ENCODE measurements at regions of chr2 and their contacts with region 1.

Region 1: DNA sequence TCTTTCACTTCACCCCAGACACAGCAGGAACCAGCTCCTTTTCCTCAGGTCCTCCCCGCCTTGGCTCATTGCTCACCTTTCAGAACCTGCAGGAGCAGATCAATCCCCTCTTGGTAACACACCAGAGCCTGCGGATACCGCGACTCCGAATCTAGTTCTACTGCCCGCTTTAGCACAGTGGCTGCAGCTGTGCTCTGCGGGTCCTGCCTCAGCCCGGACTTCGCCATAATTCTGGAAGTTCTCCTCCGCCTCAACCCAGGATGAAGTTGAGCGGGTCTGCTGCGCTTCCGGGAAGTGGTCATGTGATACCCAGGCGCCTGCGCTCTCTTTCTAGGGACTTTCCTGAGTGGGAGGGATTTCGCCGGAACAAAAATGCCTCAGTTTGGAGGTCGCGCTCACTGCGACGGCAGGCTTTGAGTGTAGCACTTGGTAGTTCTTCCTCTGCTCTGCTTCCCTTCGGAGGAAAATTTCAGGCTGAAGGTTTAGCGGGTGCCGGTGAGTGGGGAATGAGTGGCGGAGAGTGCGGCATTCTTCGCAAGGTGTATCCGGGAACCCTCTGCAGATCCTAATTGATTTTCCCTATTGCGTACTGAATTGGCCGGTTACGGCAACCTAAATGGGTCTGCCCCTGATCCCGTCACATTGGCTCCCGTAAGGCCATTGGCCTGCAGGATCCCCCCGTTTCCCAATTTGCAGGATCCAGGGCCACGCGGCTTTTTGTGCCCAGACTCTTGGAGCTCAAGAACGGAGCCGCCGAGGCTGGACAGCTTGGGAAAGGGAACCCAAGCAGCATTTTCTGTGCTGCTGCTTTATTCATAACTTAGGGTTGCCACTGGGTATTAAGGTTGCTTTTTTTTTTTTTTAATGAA is at the starts of genes MITD1 and MRPL30:
- DNase-seq: peak; percentile 93
- H3K4me3 Mint-ChIP-seq: peak within 1 kb of the TSS; percentile 97
- H3K27ac Mint-ChIP-seq: peak within 1 kb of the TSS; percentile 88
- H3K4me1 Mint-ChIP-seq: peaks cover 46% of the 10 kb centered on the region
- H3K27me3 Mint-ChIP-seq: no peaks in the 10 kb centered on the region
- total RNA-seq, gene MITD1: 63.3 to 67.3 TPM
- total RNA-seq, gene MRPL30: 21.1 to 22.2 TPM

Region 2: DNA sequence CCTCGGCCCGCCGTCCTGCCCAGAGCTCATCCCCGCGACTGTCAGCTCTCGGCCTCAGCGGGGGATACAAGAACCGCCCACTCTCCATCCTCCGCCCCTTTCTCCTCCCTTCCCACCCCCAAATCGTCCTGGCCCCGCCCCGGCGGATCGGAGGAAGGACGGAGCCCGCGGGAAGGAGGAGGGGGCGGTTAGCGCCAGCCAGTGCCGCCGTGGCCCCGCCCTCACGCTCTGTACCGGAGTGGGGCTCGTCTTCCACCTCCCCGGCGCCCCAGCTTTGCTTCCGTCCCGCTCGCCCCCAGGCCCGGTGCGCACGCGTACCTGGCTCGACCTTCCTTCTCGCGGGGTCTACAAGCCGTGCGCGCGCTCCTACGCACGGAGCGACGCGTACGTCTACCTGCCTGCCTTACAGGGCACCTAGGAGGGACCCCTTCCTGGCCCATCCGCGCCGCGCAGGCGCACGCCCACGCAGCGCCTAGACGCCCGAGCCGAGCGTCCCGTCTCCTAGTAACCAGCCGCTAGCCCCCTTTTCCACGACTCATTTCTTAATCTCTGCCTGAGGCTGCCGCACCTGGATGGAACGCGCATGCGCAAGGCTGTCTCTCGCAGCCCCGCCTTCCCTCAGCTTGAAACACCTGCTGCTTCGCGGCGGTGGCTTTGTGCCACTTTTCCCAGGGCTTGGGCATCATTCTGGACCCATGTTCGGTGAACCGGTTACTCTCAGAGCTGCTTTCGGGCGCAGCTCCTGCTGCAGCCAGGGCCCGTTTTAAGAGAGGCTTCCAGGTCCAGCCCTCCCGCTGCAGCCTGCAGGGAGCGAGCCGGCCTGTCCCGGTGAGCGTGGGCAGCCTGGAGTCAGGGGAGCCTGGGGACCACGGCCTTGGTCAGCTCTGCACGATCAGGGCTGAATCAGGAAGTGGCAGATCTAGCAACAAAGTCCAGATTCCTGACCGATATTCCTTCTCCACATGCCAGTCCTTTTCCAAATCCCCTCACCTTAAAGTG is 39.6 kb before region 1 on chr2 and contains the start of gene C2orf15:
- CTCF ChIA-PET with region 1: interaction called, 8 read pairs
- POLR2A ChIA-PET with region 1: interaction called, 17 read pairs
- DNase-seq: peak; percentile 94
- H3K4me3 Mint-ChIP-seq: peak within 1 kb of the TSS; percentile 97
- H3K27ac Mint-ChIP-seq: peak within 1 kb of the TSS; percentile 85
- H3K4me1 Mint-ChIP-seq: peaks cover 23% of the 10 kb centered on the region
- H3K27me3 Mint-ChIP-seq: peaks cover 9% of the 10 kb centered on the region
- total RNA-seq, gene C2orf15: 0.18 to 0.35 TPM

Region 3: DNA sequence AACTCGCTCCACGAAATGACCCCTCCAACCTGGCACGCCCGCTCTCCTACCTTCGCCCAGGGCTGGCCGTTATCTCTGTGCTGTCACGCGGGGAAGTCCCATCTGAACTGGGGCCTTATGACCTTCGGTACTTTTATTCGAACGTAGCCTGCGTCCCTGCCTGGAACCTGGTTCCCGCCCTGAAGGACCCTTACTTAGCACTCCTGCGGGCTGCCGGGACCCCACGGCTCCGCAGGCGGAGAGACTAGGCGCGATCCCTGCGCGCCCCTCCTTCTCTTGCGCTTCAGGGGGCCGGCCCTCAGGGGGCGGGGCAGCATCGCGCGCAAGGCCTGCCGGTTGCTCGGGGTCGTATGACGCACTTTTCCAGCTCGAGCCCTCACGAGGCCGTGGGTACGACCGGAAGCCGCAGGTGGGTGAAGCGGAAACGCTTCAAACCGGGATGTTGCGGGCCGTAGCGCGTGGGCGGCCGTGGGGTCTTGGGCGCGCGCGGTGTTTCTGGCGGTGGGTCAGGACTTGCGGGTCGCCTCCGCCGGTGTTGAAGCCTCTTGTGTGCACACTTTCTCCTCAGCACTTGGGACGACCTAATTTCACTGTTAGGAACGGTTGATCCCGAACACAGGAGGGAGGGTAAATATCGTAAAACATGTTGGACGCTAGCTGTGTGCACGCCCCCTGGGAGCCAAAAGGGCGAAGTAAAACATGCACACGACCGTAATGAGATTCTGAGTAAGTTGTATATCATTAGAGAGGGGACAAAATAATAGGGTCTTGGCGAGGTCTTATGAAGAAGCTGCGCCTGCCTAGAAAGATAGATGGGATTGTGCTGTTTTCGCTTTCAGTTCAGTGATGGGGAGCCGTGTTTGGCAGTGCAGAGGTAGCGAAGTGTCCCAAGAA is 26.1 kb before region 1 on chr2 and contains the starts of genes LIPT1 and TSGA10:
- CTCF ChIA-PET with region 1: interaction called, 15 read pairs
- POLR2A ChIA-PET with region 1: interaction called, 20 read pairs
- DNase-seq: peak; percentile 93
- H3K4me3 Mint-ChIP-seq: no peak within 1 kb of the TSS
- H3K27ac Mint-ChIP-seq: peak within 1 kb of the TSS; percentile 72
- H3K4me1 Mint-ChIP-seq: peaks cover 29% of the 10 kb centered on the region
- H3K27me3 Mint-ChIP-seq: no peaks in the 10 kb centered on the region
- total RNA-seq, gene LIPT1: 6.7 to 7.3 TPM
- total RNA-seq, gene TSGA10: 3.7 to 5.4 TPM

Region 4: GRCh38 chr2:99169534-99169933 is 11.5 kb before region 1 on chr2:
- CTCF ChIA-PET with region 1: interaction called, 4 read pairs
- POLR2A ChIA-PET with region 1: interaction called, 15 read pairs
- DNase-seq: no peak
- H3K4me3 Mint-ChIP-seq: no peak overlapping the region
- H3K27ac Mint-ChIP-seq: peak overlapping the region; percentile 9
- H3K4me1 Mint-ChIP-seq: peaks cover 24% of the 10 kb centered on the region
- H3K27me3 Mint-ChIP-seq: no peaks in the 10 kb centered on the region

Region 5: DNA sequence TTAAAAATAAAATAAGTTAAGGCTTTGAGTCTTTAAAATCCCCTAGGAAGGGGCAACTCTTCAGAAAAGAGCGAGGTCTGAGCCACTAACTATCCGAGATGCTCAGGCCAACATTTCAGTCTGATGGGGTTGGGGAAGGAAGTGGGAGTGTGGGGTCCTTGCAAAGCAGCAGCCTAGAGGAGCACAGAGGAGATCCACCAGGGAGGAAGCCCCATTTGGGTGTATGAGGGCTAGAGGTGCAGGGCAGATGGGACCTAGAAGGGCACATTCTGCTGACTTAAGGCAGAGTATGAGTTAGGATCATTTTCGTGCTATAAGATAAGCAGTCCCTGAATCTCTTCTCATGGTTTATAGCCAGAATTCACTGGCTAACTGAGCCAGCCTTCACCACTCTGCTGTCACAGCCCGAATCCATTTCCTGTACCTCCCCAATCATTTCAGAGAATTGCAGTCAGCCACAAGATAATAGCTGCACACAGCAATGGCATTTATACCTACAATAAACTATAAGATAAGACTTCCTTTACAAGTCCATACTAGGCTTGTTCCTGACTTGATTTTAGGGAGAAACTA is 37.0 kb after region 1 on chr2:
- CTCF ChIA-PET with region 1: no interaction called
- POLR2A ChIA-PET with region 1: no interaction called
- DNase-seq: no peak
- H3K4me3 Mint-ChIP-seq: no peak overlapping the region
- H3K27ac Mint-ChIP-seq: no peak overlapping the region
- H3K4me1 Mint-ChIP-seq: peaks cover 5% of the 10 kb centered on the region
- H3K27me3 Mint-ChIP-seq: no peaks in the 10 kb centered on the region

Region 6: DNA sequence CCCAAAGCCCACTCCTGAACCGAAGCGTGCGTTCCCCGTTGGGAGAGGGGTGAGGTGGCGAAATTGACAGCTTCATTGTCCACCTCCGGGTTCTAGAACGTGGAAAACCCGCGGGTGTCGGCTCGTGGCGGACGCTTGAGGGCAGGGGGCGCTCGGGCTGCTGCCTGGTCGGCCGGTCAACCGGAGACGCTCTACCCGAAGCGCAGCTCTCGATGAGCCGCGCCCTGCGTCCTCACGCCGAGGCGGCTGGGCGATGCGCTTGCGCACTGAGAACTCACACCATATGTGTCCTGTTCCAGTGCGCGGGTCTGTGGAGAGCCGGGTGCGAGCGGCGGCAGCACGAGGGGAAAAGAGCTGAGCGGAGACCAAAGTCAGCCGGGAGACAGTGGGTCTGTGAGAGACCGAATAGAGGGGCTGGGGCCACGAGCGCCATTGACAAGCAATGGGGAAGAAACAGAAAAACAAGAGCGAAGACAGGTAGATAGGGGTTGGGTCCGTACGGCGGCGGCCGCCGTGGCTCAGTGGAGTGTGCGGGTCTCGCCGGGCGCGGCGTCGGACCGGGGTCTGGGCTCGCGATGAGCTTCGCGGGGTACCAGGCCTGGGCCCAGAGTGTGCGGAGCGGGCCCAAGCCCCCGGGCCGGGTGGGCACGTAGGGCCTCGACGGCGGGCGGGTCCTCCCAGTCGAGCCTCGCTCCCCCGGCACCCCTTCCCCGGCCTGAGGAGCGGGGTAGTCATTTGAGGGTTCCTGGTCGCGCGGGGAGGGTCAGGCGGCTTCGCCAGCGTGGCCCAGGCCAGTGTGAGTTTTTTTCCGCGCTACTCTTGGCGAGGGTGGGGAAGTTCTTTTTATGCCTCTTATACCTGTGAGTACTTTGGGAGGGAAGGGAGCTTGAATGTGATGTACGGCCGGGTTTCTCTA is 156.4 kb after region 1 on chr2 and contains the start of gene EIF5B:
- CTCF ChIA-PET with region 1: interaction called, 19 read pairs
- POLR2A ChIA-PET with region 1: interaction called, 36 read pairs
- DNase-seq: peak; percentile 93
- H3K4me3 Mint-ChIP-seq: no peak within 1 kb of the TSS
- H3K27ac Mint-ChIP-seq: no peak within 1 kb of the TSS
- H3K4me1 Mint-ChIP-seq: peaks cover 53% of the 10 kb centered on the region
- H3K27me3 Mint-ChIP-seq: no peaks in the 10 kb centered on the region
- total RNA-seq, gene EIF5B: 37.3 to 38.3 TPM

Measured in activated CD4-positive, alpha-beta memory T cell treated with anti-CD3 and anti-CD28 coated beads, Interleukin-2, amount 10 ng/mL, durations not matched to agents 7 days and 5 days (primary cell).